ENCODE measurements at regions of chr1 and their contacts with region 1.

Region 1: DNA sequence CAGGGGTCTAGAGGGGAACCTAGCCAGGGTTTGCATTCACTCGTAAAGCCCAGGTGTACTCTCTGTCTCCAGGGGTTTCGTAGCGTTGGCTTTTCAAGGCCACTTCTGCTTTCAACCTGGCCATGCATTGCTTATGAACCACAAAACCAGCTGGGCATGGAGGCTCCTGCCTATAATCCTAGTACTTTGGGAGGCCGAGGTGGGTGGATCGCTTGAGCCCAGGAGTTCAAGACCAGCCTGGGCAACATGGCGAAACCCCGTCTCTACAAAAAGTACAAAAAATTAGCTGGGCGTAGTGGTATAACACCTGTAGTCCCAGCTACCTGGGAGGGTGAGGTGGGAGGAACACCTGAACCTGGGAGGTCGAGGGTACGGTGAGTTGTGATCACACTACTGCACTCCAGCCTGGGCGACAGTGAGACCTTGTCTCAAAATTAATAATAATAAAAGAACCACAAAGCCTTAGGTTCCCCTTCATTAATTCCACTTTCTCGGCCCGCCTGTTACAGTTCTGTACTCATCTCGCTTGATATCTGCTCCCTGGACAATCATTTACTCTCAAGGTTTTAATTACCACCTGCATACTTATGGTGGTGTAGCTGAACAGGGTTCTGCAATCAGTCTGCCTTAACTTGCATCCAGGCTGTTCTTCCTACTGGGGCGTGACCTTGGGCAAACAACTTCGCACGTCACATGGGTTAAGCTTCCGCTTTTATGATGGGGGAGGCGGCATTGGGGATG is 6.1 kb downstream of the SLC16A4 start:
- DNase-seq: peak; percentile 94
- H3K4me3 ChIP-seq: peak overlapping the region; percentile 62
- H3K27ac ChIP-seq: peak overlapping the region; percentile 94
- H3K4me1 ChIP-seq: peaks cover 80% of the 10 kb centered on the region
- CTCF ChIP-seq: no peak

Region 2: DNA sequence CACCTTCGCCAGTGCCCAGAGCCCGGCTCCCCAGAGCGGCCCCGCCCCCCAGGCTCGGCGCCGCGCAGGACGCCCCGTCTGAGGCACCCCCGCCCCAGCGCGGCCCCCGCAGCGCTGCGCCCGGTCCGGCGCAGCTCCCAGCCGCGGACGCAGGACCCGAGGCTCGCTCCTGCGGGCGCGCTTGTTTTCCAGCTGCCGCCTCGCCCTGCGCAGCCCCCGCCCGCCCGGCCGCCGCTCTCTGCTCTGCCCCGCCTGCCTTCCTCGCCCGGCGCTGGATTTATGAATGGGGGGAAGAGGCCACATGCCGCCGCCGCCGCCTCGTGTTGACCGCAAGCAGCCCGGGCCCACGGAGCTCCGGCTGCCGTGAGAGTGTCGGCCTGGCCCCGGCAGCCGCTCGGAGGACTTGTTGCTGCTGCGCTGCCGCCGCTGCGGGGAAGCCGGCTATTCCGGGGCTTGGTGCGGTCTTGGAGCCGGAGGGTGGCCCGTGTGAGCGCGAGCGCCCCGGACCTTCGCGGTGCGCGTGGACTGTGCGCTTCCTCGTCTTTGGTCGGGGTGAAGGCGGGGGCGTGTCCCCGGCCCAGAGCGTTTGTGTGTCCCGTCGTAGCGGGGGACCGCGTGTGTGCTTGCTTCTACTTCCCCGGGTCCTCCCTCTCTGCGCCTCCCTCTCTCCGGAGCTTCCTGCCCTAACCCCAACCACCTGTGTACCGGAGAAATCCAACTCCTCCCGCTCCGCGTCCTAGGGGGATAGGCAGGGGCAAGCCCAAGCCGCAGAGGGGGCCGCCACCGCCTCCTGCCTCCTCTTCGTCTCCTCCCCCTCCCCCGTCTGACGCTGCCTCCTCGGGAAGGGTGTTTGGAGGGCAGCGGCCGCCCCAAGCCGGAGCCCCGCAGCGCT is 173.9 kb before region 1 on chr1:
- CTCF ChIA-PET with region 1: no interaction called
- POLR2A ChIA-PET with region 1: no interaction called
- intact Hi-C with region 1: no loop called
- DNase-seq: peak; percentile 58
- H3K4me3 ChIP-seq: peak overlapping the region; percentile 71
- H3K27ac ChIP-seq: peak overlapping the region; percentile 33
- H3K4me1 ChIP-seq: peaks cover 31% of the 10 kb centered on the region
- CTCF ChIP-seq: no peak

Region 3: GRCh38 chr1:110338886-110339406 is 45.8 kb before region 1 on chr1 and contains the start of gene RBM15:
- CTCF ChIA-PET with region 1: no interaction called
- POLR2A ChIA-PET with region 1: interaction called, 39 read pairs
- intact Hi-C with region 1: loop called (anchors 1 kb)
- DNase-seq: peak; percentile 100
- H3K4me3 ChIP-seq: peak within 1 kb of the TSS; percentile 93
- H3K27ac ChIP-seq: peak within 1 kb of the TSS; percentile 92
- H3K4me1 ChIP-seq: peaks cover 28% of the 10 kb centered on the region
- CTCF ChIP-seq: no peak
- total RNA-seq, gene RBM15: 221 and 231 TPM in 2 replicates

Region 4: DNA sequence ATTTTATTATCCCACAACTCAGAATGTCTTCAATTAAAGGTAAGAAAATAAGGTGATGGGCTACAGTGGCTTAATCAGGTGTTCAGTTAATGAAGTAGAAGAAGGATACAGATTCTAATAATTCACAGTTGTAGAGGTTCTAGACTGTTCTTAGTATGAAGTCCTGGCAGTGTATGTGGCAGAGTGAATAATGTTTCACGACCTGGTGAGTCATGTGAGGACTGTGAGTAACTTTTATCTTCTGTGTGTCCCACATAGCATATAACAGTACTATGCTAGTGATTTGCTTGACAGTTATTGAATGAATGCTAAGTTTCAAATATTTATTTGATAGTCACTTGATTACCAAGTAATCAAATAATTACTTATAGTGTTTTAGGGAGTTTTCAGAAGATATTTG is 13.9 kb before region 1 on chr1:
- CTCF ChIA-PET with region 1: no interaction called
- POLR2A ChIA-PET with region 1: interaction called, 10 read pairs
- intact Hi-C with region 1: no loop called
- DNase-seq: no peak
- H3K4me3 ChIP-seq: no peak overlapping the region
- H3K27ac ChIP-seq: no peak overlapping the region
- H3K4me1 ChIP-seq: peaks cover 10% of the 10 kb centered on the region
- CTCF ChIP-seq: no peak

Region 5: DNA sequence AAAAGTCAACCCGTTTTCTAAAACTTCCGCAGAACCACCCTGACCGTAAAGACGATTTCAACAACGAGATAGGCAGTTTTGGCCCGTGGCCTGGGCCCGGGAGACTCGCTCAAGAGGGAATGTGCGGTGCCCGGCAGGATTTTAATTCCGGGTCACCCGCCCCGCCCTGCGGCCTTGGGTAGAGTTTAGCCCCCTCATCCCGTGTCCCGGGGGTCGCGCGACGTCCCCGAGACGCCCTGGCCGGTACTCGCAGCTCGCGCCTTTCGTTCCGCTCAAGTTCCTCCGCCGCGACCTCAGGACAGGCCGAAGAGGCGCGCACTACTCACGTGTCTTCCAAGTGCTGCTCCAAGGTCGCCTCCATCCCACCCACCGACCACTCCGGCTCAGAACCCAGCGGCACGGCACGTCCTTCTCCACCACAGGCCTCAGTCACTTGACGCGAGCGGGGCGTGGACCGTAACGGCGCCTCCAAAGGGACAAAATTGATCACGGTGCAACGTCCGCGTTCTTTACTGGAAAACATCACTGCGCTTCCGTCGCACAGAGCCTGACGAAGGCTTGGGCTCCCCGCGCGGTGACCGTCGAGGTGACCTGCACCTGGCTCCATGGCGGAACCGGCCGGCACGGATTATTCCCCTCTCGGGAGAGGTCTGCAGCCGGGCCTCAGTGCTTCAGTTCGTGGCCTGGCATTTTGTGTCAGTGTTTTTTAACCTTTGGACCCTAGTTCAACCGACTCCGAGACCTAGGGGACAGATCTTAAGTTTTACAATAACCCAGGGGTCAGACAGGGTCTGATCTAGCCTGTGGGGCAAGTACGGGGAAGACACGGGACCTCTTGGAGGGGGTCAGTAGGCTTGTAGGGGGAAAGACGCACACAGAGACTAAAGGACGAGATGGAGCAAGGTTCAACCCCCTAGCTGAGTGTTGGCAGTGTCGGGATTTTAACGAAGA is 22.8 kb after region 1 on chr1 and contains the start of gene LAMTOR5:
- CTCF ChIA-PET with region 1: interaction called, 4 read pairs
- POLR2A ChIA-PET with region 1: interaction called, 23 read pairs
- intact Hi-C with region 1: loop called (anchors 1 kb)
- DNase-seq: peak; percentile 91
- H3K4me3 ChIP-seq: peak within 1 kb of the TSS; percentile 80
- H3K27ac ChIP-seq: peak within 1 kb of the TSS; percentile 65
- H3K4me1 ChIP-seq: peaks cover 24% of the 10 kb centered on the region
- CTCF ChIP-seq: 0 out of 2 replicates have a peak, but pooled peaks have one; percentile 15
- total RNA-seq, gene LAMTOR5: 109 and 111 TPM in 2 replicates

Region 6: GRCh38 chr1:110477041-110477440 is 92.3 kb after region 1 on chr1:
- CTCF ChIA-PET with region 1: no interaction called
- POLR2A ChIA-PET with region 1: no interaction called
- intact Hi-C with region 1: no loop called
- DNase-seq: no peak
- H3K4me3 ChIP-seq: no peak overlapping the region
- H3K27ac ChIP-seq: no peak overlapping the region
- H3K4me1 ChIP-seq: no peaks in the 10 kb centered on the region
- CTCF ChIP-seq: no peak